Right ventricle myocardium superior (tissue), 1 donor: ENCODE measurements at regions of chr14 and their contacts with region 1.

Region 1: DNA sequence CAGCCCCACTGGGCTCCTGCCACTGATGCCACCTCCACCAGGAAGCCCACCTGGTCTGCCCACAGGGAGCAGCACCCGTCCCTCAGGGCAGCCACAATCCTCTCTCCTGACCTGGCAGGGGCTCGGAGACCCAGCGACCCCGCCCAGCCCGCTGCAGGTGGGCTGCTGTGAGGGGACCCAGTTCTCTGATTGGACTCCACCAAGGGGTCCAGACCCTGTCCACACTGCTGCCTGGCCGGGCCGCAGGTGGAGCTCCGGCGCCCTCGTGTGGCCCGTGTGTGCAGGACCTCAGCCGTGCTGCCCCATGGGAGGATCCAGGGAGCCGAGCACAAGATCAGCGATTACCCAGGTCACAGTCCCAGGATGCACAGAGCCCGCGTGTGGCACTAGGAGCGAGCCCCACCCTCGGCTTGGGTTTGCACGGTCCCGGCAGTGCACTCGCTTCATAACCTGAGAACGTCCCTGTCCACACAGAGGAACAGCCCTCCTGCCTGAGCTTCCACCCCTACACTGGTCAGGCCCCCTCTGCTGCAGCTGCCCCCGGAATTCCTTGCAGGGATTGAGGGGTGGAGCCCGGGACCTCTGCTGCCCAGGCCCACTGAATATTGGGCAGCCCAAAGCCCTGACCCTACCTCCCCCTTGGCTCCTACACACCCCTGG is 35.4 kb upstream of the TMEM179 start:
- DNase-seq: peak; percentile 76
- ATAC-seq: peak; percentile 94

Region 2: DNA sequence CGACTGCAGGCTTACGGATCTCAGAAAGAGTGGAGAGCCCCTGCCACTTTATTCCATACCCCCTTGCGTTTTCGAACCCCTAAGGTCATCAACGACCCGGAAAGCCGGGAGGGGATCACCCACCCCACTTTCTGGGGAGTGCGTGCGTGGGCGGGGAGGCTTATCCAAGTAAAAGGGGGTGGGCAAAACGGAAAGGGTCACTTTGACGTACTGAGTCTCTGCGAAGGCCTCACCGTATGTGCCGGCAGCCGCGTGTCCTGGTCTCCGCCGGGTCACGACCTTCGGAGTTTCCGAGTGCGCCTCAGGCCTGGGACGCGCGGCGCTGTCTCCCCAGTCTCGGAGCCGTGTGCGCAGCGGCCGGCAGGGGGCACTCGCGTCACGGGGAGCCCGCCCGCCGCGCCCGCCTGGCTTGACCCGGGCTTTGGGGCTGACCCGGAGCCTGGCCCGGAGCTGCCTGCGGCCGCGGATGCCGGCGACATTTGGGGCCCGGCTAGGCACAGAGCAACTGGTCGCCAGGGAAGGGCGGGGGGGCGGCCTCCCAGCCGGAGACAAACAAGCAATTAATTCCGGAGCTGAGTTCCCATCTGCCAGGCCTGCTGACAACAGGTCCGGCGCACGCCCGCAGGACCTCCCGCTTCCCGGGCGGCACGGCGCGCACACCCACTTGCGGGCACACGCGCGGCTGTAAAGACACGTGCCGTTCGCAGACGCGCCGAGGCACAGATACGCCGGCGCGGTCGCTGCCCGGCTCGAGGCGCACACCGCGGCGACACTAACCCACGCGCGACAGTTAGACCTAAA is 502.5 kb before region 1 on chr14:
- intact Hi-C with region 1: loop called (anchors 5 kb)
- DNase-seq: peak; percentile 80
- ATAC-seq: peak; percentile 95